IMR-90 (cell line): ENCODE measurements at regions of chr3 and their contacts with region 1.

Region 1: DNA sequence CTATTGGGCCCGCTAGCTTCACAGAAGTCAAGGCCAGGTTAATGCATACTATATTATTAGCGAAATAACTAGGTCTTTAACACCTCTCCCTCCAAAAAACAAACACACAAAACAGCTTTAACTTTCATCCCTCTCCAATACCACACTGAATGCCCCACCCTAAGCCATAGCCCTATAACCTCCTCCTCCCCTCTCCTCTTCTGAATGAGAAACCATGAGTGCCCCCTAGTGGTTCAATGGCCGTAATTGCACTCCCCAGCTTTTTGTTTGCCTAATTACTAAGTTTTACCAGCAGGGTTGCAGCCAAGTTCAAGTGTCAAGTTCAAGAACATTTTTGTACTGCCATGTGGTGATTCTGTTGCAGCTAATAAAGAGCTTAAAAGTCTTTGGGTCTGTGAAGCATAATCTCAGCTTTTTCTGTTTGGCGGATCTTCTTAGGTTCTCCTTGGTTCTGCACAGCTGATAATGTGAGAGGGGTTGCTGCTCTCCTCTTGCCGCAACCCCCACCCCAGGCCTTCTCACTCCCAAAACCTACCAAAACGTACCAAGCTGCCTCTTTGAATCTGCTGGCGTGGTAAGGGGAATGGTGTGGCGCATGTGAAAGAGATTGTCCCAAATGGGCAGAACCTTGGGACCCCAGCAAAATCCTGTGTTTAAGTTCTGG is 57.9 kb downstream of the RPL22L1 start:
- DNase-seq: peak; percentile 78
- ATAC-seq: peak; percentile 81
- H3K4me3 ChIP-seq: no peak overlapping the region
- H3K27ac ChIP-seq: peak overlapping the region; percentile 1; the same call in 1 of the 2 replicates
- H3K4me1 ChIP-seq: peaks cover 6% of the 10 kb centered on the region
- H3K27me3 ChIP-seq: no peaks in the 10 kb centered on the region
- CTCF ChIP-seq: peak; percentile 94
- POLR2A ChIP-seq: peak; percentile 37; the same call in 1 of the 2 replicates
- RAD21 ChIP-seq: peak; percentile 92

Region 2: GRCh38 chr3:170307671-170308403 is 504.2 kb before region 1 on chr3:
- CTCF ChIA-PET with region 1: interaction called, 7 read pairs
- POLR2A ChIA-PET with region 1: no interaction called
- dilution Hi-C with region 1: no loop called
- in situ Hi-C with region 1: no loop called
- intact Hi-C with region 1: loop called (anchors 2 kb)
- DNase-seq: peak; percentile 79
- ATAC-seq: peak; percentile 10; the same call in 1 of the 2 replicates
- H3K4me3 ChIP-seq: no peak overlapping the region
- H3K27ac ChIP-seq: no peak overlapping the region
- H3K4me1 ChIP-seq: peaks cover 4% of the 10 kb centered on the region
- H3K27me3 ChIP-seq: no peaks in the 10 kb centered on the region
- CTCF ChIP-seq: no peak
- POLR2A ChIP-seq: no peak
- RAD21 ChIP-seq: no peak

Region 3: DNA sequence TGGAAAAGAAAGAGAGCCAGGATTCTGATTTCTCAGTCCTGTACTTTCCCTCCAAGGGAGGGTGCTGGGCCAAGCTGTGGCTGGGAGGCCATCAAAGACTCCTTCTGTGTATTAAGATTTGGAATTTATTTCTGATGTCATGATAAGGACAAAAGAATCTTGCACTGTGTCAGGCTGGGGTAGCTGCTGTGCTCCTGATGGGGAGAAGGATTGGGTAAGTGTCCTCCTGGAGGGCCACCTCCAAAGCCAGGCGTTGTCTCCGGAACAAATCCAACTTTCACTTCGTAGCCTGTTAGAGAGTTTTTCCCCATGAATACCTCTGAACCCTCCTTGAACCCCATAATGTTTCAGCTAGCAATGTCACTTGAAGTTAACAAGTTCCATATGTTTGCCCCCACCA is 363.5 kb before region 1 on chr3:
- CTCF ChIA-PET with region 1: interaction called, 11 read pairs
- POLR2A ChIA-PET with region 1: no interaction called
- dilution Hi-C with region 1: no loop called
- in situ Hi-C with region 1: no loop called
- intact Hi-C with region 1: no loop called
- DNase-seq: peak; percentile 33
- ATAC-seq: peak; percentile 75
- H3K4me3 ChIP-seq: peak overlapping the region; percentile 1; the same call in 1 of the 2 replicates
- H3K27ac ChIP-seq: peak overlapping the region; percentile 21; the same call in 1 of the 2 replicates
- H3K4me1 ChIP-seq: no peaks in the 10 kb centered on the region; the same call in 1 of the 2 replicates
- H3K27me3 ChIP-seq: no peaks in the 10 kb centered on the region
- CTCF ChIP-seq: no peak
- POLR2A ChIP-seq: no peak
- RAD21 ChIP-seq: no peak

Region 4: DNA sequence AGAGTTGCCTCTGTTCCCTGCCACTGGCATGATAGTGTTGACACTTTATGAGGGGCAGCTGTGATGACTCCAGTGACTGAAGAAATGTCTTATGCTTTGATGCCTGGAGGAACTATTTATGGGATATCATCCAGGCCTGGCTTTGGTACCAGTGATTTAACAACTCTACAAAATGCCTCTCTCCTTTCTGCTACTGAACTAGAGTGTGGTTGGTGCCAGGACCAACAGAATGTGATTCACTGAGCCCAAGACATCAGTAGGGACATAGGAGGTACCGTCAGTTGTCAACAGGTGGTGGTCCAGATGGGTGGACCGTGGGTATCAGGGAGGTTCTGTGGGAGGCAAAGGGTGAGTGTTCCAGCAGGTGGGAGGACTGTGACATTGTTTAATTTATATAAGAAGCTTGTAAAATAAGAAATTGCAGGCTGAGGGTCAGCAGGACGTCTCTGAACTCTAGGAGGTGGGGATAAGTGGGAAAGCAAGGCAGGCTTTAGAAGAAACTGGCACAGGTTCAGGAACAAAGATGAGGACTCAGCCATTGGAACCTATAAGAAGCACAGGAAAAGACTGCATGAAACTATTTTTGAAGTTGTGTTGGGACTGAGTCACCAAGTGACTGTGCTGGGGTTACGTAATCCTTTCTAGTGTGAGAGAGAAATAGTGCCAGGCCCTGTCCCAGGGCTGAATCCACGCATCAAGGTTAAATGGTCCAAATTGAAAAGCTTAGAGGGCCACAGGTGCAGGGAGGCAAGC is 197.7 kb before region 1 on chr3:
- CTCF ChIA-PET with region 1: interaction called, 3 read pairs
- POLR2A ChIA-PET with region 1: no interaction called
- dilution Hi-C with region 1: no loop called
- in situ Hi-C with region 1: loop called (anchors 10 kb)
- intact Hi-C with region 1: no loop called
- DNase-seq: peak; percentile 94
- ATAC-seq: peak; percentile 99
- H3K4me3 ChIP-seq: no peak overlapping the region
- H3K27ac ChIP-seq: peak overlapping the region; percentile 19
- H3K4me1 ChIP-seq: peaks cover 5% of the 10 kb centered on the region
- H3K27me3 ChIP-seq: no peaks in the 10 kb centered on the region
- CTCF ChIP-seq: no peak
- POLR2A ChIP-seq: no peak
- RAD21 ChIP-seq: no peak

Region 5: GRCh38 chr3:170689893-170690660 is 122.0 kb before region 1 on chr3:
- CTCF ChIA-PET with region 1: interaction called, 6 read pairs
- POLR2A ChIA-PET with region 1: no interaction called
- dilution Hi-C with region 1: no loop called
- in situ Hi-C with region 1: no loop called
- intact Hi-C with region 1: loop called (anchors 1 kb)
- DNase-seq: peak; percentile 52
- ATAC-seq: peak; percentile 57
- H3K4me3 ChIP-seq: no peak overlapping the region
- H3K27ac ChIP-seq: peak overlapping the region; percentile 85
- H3K4me1 ChIP-seq: peaks cover 14% of the 10 kb centered on the region
- H3K27me3 ChIP-seq: no peaks in the 10 kb centered on the region
- CTCF ChIP-seq: peak; percentile 65
- POLR2A ChIP-seq: no peak
- RAD21 ChIP-seq: peak; percentile 72

Region 6: DNA sequence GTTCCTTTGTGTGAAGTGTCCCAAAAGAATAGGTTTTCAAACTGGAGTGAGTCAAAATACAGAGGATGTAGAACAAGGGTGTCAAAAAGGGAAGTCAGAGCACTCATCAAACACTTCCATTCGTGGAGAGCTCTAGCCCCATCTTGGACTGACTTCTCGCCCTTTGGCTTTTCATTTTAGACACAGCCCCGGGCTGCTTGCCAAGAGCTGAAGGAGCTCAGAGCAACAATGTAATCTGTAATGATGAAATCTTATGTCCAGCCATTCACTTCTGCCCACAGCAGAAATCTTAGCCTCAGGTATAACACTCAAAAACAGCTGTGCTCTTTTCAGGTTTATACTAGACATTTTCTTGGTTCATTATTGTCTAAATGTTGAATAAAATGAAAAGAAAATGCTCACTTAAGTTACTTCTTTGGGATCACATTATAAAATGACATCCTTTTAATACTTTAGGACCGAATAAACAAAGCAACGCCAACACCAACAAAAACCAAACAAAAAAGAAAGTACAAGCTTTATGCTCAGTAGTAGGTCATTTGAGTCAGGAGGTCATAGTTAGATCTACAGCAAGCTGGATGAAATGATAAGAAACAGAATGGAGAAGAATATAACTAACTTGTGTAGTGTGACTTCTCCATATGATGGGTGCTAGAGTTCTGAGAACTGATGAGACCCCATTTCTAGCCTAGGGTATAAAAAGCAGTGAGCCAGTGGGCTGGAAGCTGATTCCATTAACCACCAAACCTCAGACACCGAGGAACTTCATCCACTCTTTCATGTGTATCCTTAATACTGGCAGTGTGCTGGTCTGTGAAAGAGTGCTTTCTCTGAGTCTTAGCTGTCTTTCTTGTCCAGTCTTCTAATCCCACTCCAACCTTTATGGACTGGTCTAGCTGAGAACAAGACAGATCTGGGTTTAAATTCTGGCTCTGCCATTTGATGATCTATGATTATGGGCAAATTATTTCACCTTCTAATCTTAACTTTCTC is 94.4 kb before region 1 on chr3:
- CTCF ChIA-PET with region 1: interaction called, 25 read pairs
- POLR2A ChIA-PET with region 1: no interaction called
- dilution Hi-C with region 1: no loop called
- in situ Hi-C with region 1: loop called (anchors 10 kb)
- intact Hi-C with region 1: no loop called
- DNase-seq: peak; percentile 64
- ATAC-seq: no peak
- H3K4me3 ChIP-seq: no peak overlapping the region
- H3K27ac ChIP-seq: peak overlapping the region; percentile 15; the same call in 1 of the 2 replicates
- H3K4me1 ChIP-seq: peaks cover 8% of the 10 kb centered on the region
- H3K27me3 ChIP-seq: no peaks in the 10 kb centered on the region
- CTCF ChIP-seq: no peak
- POLR2A ChIP-seq: no peak
- RAD21 ChIP-seq: no peak

Region 7: DNA sequence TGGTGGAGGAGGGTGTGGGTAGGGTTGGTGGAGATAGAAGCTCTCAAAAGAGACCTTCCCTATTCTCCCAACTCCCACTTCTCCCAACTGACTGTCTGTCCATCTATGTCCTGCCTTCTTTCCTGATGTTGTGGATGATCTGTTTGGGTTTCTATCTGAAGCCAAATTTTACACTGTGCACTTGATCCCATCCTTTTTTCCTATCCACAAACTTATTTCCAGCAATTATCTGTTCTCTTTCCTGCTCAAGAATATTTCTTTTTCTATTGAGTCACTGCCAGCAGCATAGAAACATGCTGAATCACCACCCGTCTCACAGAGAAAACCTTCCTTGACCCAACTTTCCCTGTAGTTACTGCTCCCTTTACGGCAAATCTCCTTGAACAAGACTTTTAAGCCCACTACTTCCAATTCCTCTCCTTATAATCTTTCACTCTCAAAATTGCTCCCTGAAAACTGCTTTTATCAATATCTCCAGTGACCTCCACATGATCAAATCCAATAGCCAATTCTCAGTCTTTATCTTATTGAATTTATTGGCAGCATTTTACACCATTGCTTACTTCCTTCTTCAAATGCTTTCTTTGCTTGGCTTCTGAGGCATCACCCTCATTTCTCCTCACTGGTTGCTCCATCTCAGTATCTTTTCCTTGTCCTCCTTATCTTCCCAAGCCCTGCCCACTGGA is 84.9 kb before region 1 on chr3:
- CTCF ChIA-PET with region 1: interaction called, 24 read pairs
- POLR2A ChIA-PET with region 1: no interaction called
- dilution Hi-C with region 1: no loop called
- in situ Hi-C with region 1: no loop called
- intact Hi-C with region 1: loop called (anchors 1 kb)
- DNase-seq: peak; percentile 94
- ATAC-seq: peak; percentile 59
- H3K4me3 ChIP-seq: no peak overlapping the region
- H3K27ac ChIP-seq: peak overlapping the region; percentile 99
- H3K4me1 ChIP-seq: peaks cover 26% of the 10 kb centered on the region
- H3K27me3 ChIP-seq: no peaks in the 10 kb centered on the region
- CTCF ChIP-seq: no peak
- POLR2A ChIP-seq: no peak
- RAD21 ChIP-seq: peak; percentile 17; the same call in 1 of the 2 replicates

Region 8: DNA sequence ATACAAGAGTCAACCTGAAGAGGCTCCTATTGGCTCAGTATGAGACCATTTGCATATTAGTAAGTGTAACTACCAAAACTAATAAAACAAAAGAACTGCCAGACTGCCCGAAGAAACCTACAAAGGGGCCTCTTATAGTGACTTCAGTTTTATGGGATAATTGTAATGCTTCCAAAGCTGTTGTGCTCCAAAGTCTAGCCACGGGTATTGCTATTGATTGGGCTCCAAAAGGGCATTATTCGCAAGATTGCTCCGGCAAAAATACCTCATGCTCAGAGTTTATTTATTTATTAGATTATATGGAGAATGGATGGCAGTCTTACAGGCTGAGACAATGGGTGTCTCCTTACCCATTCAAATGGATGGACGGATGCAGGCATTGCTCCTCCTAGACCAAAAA is 46.5 kb after region 1 on chr3:
- CTCF ChIA-PET with region 1: no interaction called
- POLR2A ChIA-PET with region 1: no interaction called
- dilution Hi-C with region 1: no loop called
- in situ Hi-C with region 1: no loop called
- intact Hi-C with region 1: no loop called
- DNase-seq: no peak
- ATAC-seq: no peak
- H3K4me3 ChIP-seq: no peak overlapping the region
- H3K27ac ChIP-seq: no peak overlapping the region
- H3K4me1 ChIP-seq: 0 out of 2 replicates have a peak, but pooled peaks cover 2% of the 10 kb centered on the region
- H3K27me3 ChIP-seq: no peaks in the 10 kb centered on the region
- CTCF ChIP-seq: no peak
- POLR2A ChIP-seq: no peak
- RAD21 ChIP-seq: no peak